ENCODE measurements at regions of chr7 and their contacts with region 1.

Region 1: GRCh38 chr7:91636129-91636724 is 244.3 kb downstream of the MTERF1 start:
- DNase-seq: no peak
- ATAC-seq: peak in 1 of 4 donors; percentile 20
- H3K4me3 ChIP-seq: no peak overlapping the region
- H3K27ac ChIP-seq: no peak overlapping the region
- H3K4me1 ChIP-seq: peaks cover 0 to 14% (median 0%) of the 10 kb centered on the region in 12 donors
- H3K27me3 ChIP-seq: no peaks in the 10 kb centered on the region
- CTCF ChIP-seq: peak; percentile 34 to 66 (median 56)
- POLR2A ChIP-seq: no peak

Region 2: GRCh38 chr7:91082852-91083495 is 553.3 kb before region 1 on chr7:
- intact Hi-C with region 1: loop called (anchors 5 to 10 kb)
- DNase-seq: no peak
- ATAC-seq: peak in 1 of 4 donors; percentile 55
- H3K4me3 ChIP-seq: no peak overlapping the region
- H3K27ac ChIP-seq: peak overlapping the region in 7 of 12 donors; percentile 11 to 68 (median 48)
- H3K4me1 ChIP-seq: peaks cover 0 to 44% (median 25%) of the 10 kb centered on the region in 12 donors
- H3K27me3 ChIP-seq: no peaks in the 10 kb centered on the region
- CTCF ChIP-seq: peak; percentile 30 to 71 (median 56)
- POLR2A ChIP-seq: no peak

Region 3: DNA sequence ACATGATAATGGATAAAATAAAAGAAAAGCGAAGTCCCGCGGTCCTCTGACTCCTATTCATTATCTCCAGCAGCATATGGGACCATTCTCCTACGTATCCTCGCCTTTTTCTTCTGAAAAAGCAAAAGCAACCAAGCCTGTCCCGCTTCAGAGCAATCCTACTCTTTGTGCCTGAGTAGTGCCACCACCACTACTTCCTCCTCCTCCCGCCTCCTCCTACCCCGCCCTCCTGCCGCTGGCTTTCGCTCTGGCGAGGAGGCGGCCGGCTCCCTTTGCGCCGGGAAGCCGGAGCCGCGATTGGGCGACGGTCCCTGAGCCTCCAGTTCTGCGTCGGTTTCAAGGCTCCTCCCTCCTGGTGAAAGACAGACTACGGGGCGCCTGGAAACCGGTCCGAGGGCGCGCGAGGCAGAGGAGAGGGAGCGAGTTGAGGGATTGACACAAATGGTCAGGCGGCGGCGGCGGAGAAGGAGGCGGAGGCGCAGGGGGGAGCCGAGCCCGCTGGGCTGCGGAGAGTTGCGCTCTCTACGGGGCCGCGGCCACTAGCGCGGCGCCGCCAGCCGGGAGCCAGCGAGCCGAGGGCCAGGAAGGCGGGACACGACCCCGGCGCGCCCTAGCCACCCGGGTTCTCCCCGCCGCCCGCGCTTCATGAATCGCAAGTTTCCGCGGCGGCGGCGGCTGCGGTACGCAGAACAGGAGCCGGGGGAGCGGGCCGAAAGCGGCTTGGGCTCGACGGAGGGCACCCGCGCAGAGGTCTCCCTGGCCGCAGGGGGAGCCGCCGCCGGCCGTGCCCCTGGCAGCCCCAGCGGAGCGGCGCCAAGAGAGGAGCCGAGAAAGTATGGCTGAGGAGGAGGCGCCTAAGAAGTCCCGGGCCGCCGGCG is 371.9 kb before region 1 on chr7 and contains the start of gene FZD1:
- intact Hi-C with region 1: loop called in 1 of 10 experiments (anchors 10 kb)
- DNase-seq: peak; percentile 97 to 98 (median 97)
- ATAC-seq: peak; percentile 95 to 97 (median 97)
- H3K4me3 ChIP-seq: peak within 1 kb of the TSS; percentile 77 to 95 (median 86)
- H3K27ac ChIP-seq: peak within 1 kb of the TSS; percentile 91 to 97 (median 95)
- H3K4me1 ChIP-seq: peaks cover 0 to 35% (median 18%) of the 10 kb centered on the region in 12 donors
- H3K27me3 ChIP-seq: peaks cover 0 to 15% (median 0%) of the 10 kb centered on the region in 9 donors
- CTCF ChIP-seq: peak in 3 of 12 donors; percentile 5 to 30 (median 19)
- POLR2A ChIP-seq: peak in 1 of 2 donors; percentile 87
- total RNA-seq, gene FZD1: 11.5 to 29.8 (median 17.9) TPM

Region 4: DNA sequence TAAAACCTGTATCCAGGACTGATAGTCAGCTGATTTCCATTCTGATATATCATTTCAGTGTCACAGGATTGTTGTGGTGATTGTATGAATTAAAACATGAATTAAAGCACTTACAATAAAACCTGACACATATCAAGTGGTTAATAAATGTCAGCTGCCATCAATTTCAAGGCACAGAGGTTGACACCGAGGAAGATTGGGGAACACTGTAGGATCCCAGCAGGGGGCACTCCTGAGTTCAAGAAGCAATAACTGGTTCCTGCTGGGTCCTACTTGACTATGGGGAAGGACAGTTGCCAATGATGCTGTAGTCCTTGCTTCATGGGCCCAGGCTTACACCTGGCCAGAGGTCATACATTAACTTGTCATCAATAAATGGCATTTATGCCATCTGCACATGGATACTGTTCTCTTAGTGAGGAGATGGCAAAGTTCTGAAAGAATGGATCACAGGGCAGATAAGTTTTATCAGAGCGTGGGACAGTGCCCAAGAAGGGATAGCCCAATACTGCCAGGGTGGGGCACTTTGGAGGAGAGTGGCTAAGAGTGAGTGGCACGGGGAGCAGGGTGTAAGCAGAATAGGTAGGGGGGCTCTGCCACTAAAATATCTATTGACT is 347.9 kb before region 1 on chr7:
- intact Hi-C with region 1: loop called in 8 of 10 experiments (anchors 1 to 10 kb)
- DNase-seq: peak; percentile 37 to 61 (median 45)
- ATAC-seq: no peak
- H3K4me3 ChIP-seq: no peak overlapping the region
- H3K27ac ChIP-seq: no peak overlapping the region
- H3K4me1 ChIP-seq: peaks cover 0 to 5% (median 0%) of the 10 kb centered on the region in 12 donors
- H3K27me3 ChIP-seq: peaks cover 0 to 3% (median 0%) of the 10 kb centered on the region in 9 donors
- CTCF ChIP-seq: peak; percentile 21 to 61 (median 46)
- POLR2A ChIP-seq: no peak